WTC11 (cell line): ENCODE measurements at regions of chr6 and their contacts with region 1.

Region 1: GRCh38 chr6:104472021-104472901 is 387.5 kb downstream of the HACE1 start:
- DNase-seq: no peak
- ATAC-seq: peak; percentile 16; the same call in 1 of the 2 replicates
- H3K4me3 Mint-ChIP-seq: peak overlapping the region; percentile 44
- H3K27ac Mint-ChIP-seq: peak overlapping the region; percentile 85
- H3K4me1 Mint-ChIP-seq: peaks cover 31% of the 10 kb centered on the region
- H3K27me3 Mint-ChIP-seq: no peaks in the 10 kb centered on the region
- CTCF ChIP-seq: no peak

Region 2: GRCh38 chr6:104428184-104428583 is 44.1 kb before region 1 on chr6:
- CTCF ChIA-PET with region 1: no interaction called
- POLR2A ChIA-PET with region 1: no interaction called
- DNase-seq: no peak
- ATAC-seq: no peak
- H3K4me3 Mint-ChIP-seq: no peak overlapping the region
- H3K27ac Mint-ChIP-seq: no peak overlapping the region
- H3K4me1 Mint-ChIP-seq: peaks cover 4% of the 10 kb centered on the region
- H3K27me3 Mint-ChIP-seq: no peaks in the 10 kb centered on the region
- CTCF ChIP-seq: no peak

Region 3: DNA sequence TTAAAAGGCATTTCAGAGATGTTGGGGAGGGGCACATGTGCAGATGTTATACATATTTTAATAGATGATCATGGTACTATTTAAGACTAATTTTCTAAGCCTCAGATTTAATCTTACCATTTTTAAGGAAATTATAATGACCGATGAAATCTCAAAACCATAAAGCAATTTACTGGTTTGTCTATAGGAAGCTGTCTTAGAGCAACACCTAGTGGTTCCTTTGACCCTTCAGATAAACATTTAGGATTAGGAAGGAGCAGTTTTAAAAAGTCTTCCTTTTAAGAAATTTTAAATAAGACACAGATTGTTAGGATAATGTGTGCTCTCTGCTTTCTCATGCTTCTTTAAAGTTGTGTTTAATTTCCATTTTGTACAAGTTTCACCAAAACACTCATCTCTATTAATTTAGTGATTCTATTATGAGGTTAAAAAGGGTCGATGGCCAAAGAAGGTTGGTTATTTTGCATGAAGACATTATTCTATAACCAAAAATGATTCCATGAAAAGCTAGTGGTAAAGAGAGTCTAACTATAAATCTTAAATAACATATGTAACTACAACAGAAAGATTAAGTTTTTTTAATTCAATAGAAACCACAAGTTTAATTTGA is 11.1 kb after region 1 on chr6:
- CTCF ChIA-PET with region 1: interaction called, 11 read pairs
- POLR2A ChIA-PET with region 1: no interaction called
- DNase-seq: no peak
- ATAC-seq: no peak
- H3K4me3 Mint-ChIP-seq: no peak overlapping the region
- H3K27ac Mint-ChIP-seq: no peak overlapping the region
- H3K4me1 Mint-ChIP-seq: no peaks in the 10 kb centered on the region
- H3K27me3 Mint-ChIP-seq: no peaks in the 10 kb centered on the region
- CTCF ChIP-seq: no peak

Region 4: GRCh38 chr6:104881964-104882668 is 409.9 kb after region 1 on chr6:
- CTCF ChIA-PET with region 1: no interaction called
- POLR2A ChIA-PET with region 1: no interaction called
- DNase-seq: no peak
- ATAC-seq: no peak
- H3K4me3 Mint-ChIP-seq: no peak overlapping the region
- H3K27ac Mint-ChIP-seq: no peak overlapping the region
- H3K4me1 Mint-ChIP-seq: peaks cover 2% of the 10 kb centered on the region
- H3K27me3 Mint-ChIP-seq: no peaks in the 10 kb centered on the region; the same call in 1 of the 2 replicates
- CTCF ChIP-seq: no peak